Naive thymus-derived CD4-positive, alpha-beta T cell (primary cell): ENCODE measurements at regions of chr2 and their contacts with region 1.

Region 1: DNA sequence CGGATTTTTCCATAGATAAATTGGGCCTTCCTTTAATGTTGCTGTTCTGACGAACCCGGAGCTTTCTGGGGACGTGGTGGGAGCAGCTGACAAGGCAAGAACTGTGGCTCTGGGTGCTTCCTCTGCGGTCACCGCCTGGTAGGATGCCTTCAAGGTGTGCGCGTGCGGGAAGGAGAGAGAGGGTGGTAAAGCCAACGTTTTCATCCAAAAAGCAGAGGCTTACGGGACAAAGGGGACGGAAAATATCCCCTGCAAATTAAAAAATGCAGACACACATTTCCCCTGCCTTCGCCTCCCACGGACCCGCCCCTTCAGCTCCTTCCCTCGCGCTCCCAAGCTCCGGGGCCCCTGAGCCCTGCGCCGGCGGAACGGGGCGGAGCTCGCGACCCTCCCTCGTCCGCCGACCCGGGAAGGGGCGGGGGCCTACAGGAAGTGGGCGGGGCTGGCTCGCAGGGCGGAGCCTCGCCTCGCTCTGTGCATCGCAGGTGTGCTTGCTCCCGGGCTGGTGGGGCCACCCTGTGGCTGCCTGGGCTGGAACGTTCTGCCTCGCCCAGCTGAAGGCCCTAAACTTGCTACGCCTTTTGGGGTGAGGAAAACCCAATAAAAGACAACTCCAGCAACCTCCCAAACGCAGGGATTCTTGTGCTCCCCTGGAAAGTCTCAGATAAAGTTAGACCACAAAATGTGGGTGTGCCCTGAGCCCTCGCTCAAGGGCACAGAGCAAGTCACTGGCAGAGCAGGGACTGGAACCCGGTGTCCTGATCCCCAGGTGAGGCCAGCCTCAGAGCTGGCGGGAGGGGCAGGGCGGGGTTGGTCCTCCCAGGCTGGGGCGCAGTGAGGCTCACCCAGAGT is 25.4 kb upstream of the SLC66A3 start:
- DNase-seq: peak; percentile 72 to 91 (median 88)
- ATAC-seq: peak; percentile 93
- H3K4me3 ChIP-seq: peak overlapping the region; percentile 66
- H3K4me3 Mint-ChIP-seq: peak overlapping the region; percentile 72 to 88 (median 78)
- H3K27ac ChIP-seq: peak overlapping the region; percentile 75
- H3K27ac Mint-ChIP-seq: peak overlapping the region in 8 of 9 donors; percentile 77 to 92 (median 86)
- H3K4me1 ChIP-seq: peaks cover 25 to 34% of the 10 kb centered on the region in 2 donors
- H3K4me1 Mint-ChIP-seq: peaks cover 8 to 45% (median 33%) of the 10 kb centered on the region in 7 donors
- H3K27me3 ChIP-seq: no peaks in the 10 kb centered on the region
- H3K27me3 Mint-ChIP-seq: peaks cover 0 to 15% (median 0%) of the 10 kb centered on the region in 5 donors

Region 2: GRCh38 chr2:10832203-10832936 is 297.5 kb before region 1 on chr2:
- CTCF ChIA-PET with region 1: interaction called, 56 read pairs
- POLR2A ChIA-PET with region 1: interaction called, 4 read pairs
- intact Hi-C with region 1: loop called (anchors 1 kb)
- DNase-seq: peak; percentile 66 to 85 (median 75)
- ATAC-seq: peak; percentile 94
- H3K4me3 ChIP-seq: no peak overlapping the region
- H3K4me3 Mint-ChIP-seq: peak overlapping the region in 8 of 10 donors; percentile 33 to 76 (median 48)
- H3K27ac ChIP-seq: no peak overlapping the region
- H3K27ac Mint-ChIP-seq: peak overlapping the region in 1 of 9 donors; percentile 56
- H3K4me1 ChIP-seq: peaks cover 0 to 2% of the 10 kb centered on the region in 2 donors
- H3K4me1 Mint-ChIP-seq: peaks cover 0 to 16% (median 5%) of the 10 kb centered on the region in 7 donors
- H3K27me3 ChIP-seq: no peaks in the 10 kb centered on the region
- H3K27me3 Mint-ChIP-seq: peaks cover 0 to 29% (median 13%) of the 10 kb centered on the region in 5 donors

Region 3: DNA sequence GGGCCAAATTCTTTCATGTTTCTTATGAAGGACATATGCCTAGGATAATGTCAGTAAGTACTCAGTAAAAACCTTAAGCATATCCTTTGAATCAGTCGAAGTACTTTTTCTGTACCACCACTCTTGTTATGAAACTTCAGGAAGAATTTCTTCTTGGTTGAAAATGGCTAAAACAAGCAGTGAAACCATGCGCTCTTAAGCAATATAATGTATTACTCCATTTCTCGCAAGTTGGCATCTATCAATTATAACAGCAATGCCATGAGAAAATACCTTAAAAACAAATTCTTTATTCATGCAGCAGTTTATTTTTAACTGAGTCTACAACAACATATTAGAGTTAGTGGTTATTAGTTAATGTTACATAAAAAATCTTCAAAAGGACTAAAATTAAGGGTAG is 66.4 kb after region 1 on chr2:
- CTCF ChIA-PET with region 1: interaction called, 3 read pairs
- POLR2A ChIA-PET with region 1: interaction called, 4 read pairs
- intact Hi-C with region 1: loop called in 1 of 2 experiments (anchors 10 kb)
- DNase-seq: no peak
- ATAC-seq: no peak
- H3K4me3 ChIP-seq: no peak overlapping the region
- H3K4me3 Mint-ChIP-seq: no peak overlapping the region
- H3K27ac ChIP-seq: no peak overlapping the region
- H3K27ac Mint-ChIP-seq: no peak overlapping the region
- H3K4me1 ChIP-seq: no peaks in the 10 kb centered on the region
- H3K4me1 Mint-ChIP-seq: no peaks in the 10 kb centered on the region
- H3K27me3 ChIP-seq: no peaks in the 10 kb centered on the region
- H3K27me3 Mint-ChIP-seq: no peaks in the 10 kb centered on the region

Region 4: GRCh38 chr2:11411768-11412448 is 282.1 kb after region 1 on chr2:
- CTCF ChIA-PET with region 1: interaction called, 6 read pairs
- POLR2A ChIA-PET with region 1: interaction called, 3 read pairs
- intact Hi-C with region 1: loop called (anchors 1 kb)
- DNase-seq: no peak
- ATAC-seq: no peak
- H3K4me3 ChIP-seq: no peak overlapping the region
- H3K4me3 Mint-ChIP-seq: peak overlapping the region in 4 of 10 donors; percentile 18 to 40 (median 26)
- H3K27ac ChIP-seq: no peak overlapping the region
- H3K27ac Mint-ChIP-seq: no peak overlapping the region
- H3K4me1 ChIP-seq: no peaks in the 10 kb centered on the region
- H3K4me1 Mint-ChIP-seq: no peaks in the 10 kb centered on the region
- H3K27me3 ChIP-seq: no peaks in the 10 kb centered on the region
- H3K27me3 Mint-ChIP-seq: peaks cover 4 to 22% (median 19%) of the 10 kb centered on the region in 5 donors

Region 5: GRCh38 chr2:11477994-11478393 is 348.2 kb after region 1 on chr2:
- CTCF ChIA-PET with region 1: interaction called, 5 read pairs
- POLR2A ChIA-PET with region 1: no interaction called
- intact Hi-C with region 1: loop called in 1 of 2 experiments (anchors 1 kb)
- DNase-seq: peak; percentile 44 to 79 (median 63)
- ATAC-seq: peak; percentile 77
- H3K4me3 ChIP-seq: no peak overlapping the region
- H3K4me3 Mint-ChIP-seq: no peak overlapping the region
- H3K27ac ChIP-seq: no peak overlapping the region
- H3K27ac Mint-ChIP-seq: no peak overlapping the region
- H3K4me1 ChIP-seq: no peaks in the 10 kb centered on the region
- H3K4me1 Mint-ChIP-seq: peaks cover 0 to 8% (median 6%) of the 10 kb centered on the region in 7 donors
- H3K27me3 ChIP-seq: no peaks in the 10 kb centered on the region
- H3K27me3 Mint-ChIP-seq: peaks cover 28 to 39% (median 32%) of the 10 kb centered on the region in 5 donors

Region 6: DNA sequence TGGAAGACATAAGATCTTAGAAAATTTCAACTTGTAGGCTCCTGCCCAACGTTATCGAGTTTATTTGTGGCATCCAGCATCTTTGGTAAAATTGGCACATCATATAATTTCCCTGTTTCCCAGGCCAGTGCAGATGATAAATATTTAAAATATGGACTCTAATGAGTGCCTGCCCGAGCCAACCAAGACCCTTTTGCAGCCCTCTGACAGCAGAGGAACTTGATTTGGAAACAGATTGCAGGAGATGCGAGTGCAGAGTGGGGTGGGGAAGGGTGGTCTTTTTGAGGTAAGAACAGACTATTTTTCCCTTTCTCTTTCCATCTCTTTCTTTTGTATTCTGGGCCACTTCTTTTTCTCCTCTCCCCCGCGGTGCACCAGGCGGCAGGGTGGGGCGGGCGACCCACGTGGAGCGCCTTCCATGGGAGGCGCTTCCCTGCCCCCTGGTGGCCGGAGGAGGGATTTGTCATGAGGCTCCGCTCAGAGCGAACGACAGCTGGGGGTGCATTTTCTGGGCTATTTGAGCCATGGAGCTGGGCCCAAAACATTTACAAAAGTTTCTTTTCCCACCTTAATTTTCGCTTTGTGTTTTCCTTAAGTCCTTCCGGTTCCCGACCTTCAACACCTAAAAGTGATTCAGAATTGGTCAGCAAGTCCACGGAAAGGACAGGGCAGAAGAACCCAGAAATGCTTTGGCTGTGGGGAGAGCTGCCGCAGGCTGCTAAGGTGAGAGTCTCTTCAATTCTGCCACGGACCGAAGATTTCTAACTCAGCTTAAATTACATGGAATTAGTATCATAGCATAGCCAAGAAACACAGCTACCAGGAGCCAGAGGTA is 649.3 kb after region 1 on chr2:
- CTCF ChIA-PET with region 1: no interaction called
- POLR2A ChIA-PET with region 1: no interaction called
- intact Hi-C with region 1: loop called (anchors 2 to 10 kb)
- DNase-seq: peak; percentile 66 to 88 (median 83)
- ATAC-seq: peak; percentile 98
- H3K4me3 ChIP-seq: peak overlapping the region; percentile 32
- H3K4me3 Mint-ChIP-seq: peak overlapping the region; percentile 53 to 80 (median 71)
- H3K27ac ChIP-seq: no peak overlapping the region
- H3K27ac Mint-ChIP-seq: peak overlapping the region; percentile 0 to 88 (median 73)
- H3K4me1 ChIP-seq: peaks cover 13 to 15% of the 10 kb centered on the region in 2 donors
- H3K4me1 Mint-ChIP-seq: peaks cover 23 to 51% (median 41%) of the 10 kb centered on the region in 7 donors
- H3K27me3 ChIP-seq: no peaks in the 10 kb centered on the region
- H3K27me3 Mint-ChIP-seq: no peaks in the 10 kb centered on the region